ENCODE measurements at regions of chr1 and their contacts with region 1.

Region 1: DNA sequence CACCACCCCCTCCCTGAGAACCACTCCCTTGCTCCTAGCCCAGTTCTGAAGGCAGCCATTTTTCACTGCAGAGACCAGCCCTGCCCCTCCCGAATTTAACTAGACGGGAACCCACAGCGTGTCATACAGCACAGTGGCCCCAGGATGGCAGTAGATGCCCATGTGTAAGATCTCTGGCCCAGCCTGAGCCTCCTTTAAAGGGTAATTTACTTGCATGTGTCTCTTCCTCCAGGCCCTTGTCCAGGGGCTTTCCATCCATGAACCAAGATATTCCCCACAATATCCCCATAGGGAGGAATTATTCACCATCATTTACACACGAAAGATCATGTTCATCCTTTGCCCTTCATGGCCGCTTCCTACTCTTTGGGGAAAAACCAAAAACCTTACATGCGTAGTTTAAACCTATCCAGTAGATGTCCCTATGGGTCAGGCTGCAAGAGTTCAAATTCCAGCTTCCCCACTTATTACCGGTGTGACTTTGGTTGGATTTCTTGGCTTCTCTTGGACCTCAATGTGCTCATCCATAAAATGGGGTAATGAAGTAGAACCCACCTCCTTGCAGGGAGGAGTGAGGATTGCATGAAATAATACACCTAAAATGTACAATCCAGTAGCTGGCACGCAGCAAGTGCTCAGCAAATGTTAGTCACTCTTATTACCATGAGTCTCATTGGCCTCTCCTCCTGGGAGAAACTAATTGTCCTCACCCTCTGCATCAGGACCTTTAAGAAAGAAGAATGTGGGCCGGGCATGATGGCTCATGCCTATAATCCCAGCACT is 4.0 kb upstream of the LACTBL1 start:
- DNase-seq: peak; percentile 89
- ATAC-seq: peak; percentile 90
- H3K4me3 ChIP-seq: peak overlapping the region; percentile 43
- H3K27ac ChIP-seq: peak overlapping the region; percentile 3; the same call in 1 of the 2 replicates
- H3K4me1 ChIP-seq: peaks cover 21% of the 10 kb centered on the region
- H3K27me3 ChIP-seq: no peaks in the 10 kb centered on the region
- CTCF ChIP-seq: peak; percentile 95

Region 2: GRCh38 chr1:23013657-23014056 is 37.0 kb after region 1 on chr1:
- CTCF ChIA-PET with region 1: no interaction called
- POLR2A ChIA-PET with region 1: no interaction called
- intact Hi-C with region 1: loop called (anchors 2 kb)
- DNase-seq: peak; percentile 26
- ATAC-seq: no peak
- H3K4me3 ChIP-seq: no peak overlapping the region
- H3K27ac ChIP-seq: no peak overlapping the region
- H3K4me1 ChIP-seq: peaks cover 28% of the 10 kb centered on the region
- H3K27me3 ChIP-seq: no peaks in the 10 kb centered on the region
- CTCF ChIP-seq: no peak

Region 3: DNA sequence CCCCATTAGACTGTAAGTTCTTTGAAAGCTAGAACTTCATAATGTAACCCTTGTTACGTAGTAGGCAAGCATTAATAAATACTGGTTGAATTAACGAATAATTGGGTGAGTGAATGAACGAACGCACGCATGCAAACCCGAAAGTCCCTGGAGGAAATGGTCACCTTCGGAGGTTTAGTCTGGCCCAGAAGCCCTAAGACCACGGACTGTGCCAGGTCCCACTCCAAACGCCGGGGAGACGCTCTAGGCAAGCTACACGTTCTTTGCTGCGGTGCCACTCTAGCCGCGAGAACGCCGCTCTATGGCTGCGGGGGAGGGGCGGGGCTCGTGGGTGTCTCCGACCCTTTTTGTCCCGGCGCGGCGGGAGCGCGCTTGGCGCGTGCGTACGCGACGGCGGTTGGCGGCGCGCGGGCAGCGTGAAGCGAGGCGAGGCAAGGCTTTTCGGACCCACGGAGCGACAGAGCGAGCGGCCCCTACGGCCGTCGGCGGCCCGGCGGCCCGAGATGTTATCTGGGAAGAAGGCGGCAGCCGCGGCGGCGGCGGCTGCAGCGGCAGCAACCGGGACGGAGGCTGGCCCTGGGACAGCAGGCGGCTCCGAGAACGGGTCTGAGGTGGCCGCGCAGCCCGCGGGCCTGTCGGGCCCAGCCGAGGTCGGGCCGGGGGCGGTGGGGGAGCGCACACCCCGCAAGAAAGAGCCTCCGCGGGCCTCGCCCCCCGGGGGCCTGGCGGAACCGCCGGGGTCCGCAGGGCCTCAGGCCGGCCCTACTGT is 42.6 kb after region 1 on chr1 and contains the start of gene KDM1A:
- CTCF ChIA-PET with region 1: no interaction called
- POLR2A ChIA-PET with region 1: no interaction called
- intact Hi-C with region 1: loop called (anchors 1 kb)
- DNase-seq: peak; percentile 98
- ATAC-seq: peak; percentile 95
- H3K4me3 ChIP-seq: peak within 1 kb of the TSS; percentile 94
- H3K27ac ChIP-seq: peak within 1 kb of the TSS; percentile 79
- H3K4me1 ChIP-seq: peaks cover 24% of the 10 kb centered on the region; the same call in 1 of the 2 replicates
- H3K27me3 ChIP-seq: no peaks in the 10 kb centered on the region
- CTCF ChIP-seq: no peak
- total RNA-seq, gene KDM1A: 186 and 229 TPM in 2 replicates

Region 4: GRCh38 chr1:23074012-23074411 is 97.4 kb after region 1 on chr1:
- CTCF ChIA-PET with region 1: no interaction called
- POLR2A ChIA-PET with region 1: no interaction called
- intact Hi-C with region 1: loop called (anchors 1 kb)
- DNase-seq: peak; percentile 76
- ATAC-seq: peak; percentile 86
- H3K4me3 ChIP-seq: 0 out of 2 replicates have a peak overlapping the region, but pooled peaks have one; percentile 15
- H3K27ac ChIP-seq: peak overlapping the region; percentile 92
- H3K4me1 ChIP-seq: peaks cover 40% of the 10 kb centered on the region
- H3K27me3 ChIP-seq: no peaks in the 10 kb centered on the region
- CTCF ChIP-seq: no peak

Region 5: GRCh38 chr1:23403735-23404486 is 427.3 kb after region 1 on chr1:
- CTCF ChIA-PET with region 1: no interaction called
- POLR2A ChIA-PET with region 1: no interaction called
- intact Hi-C with region 1: loop called (anchors 5 kb)
- DNase-seq: peak; percentile 98
- ATAC-seq: peak; percentile 93
- H3K4me3 ChIP-seq: peak overlapping the region; percentile 49
- H3K27ac ChIP-seq: peak overlapping the region; percentile 91
- H3K4me1 ChIP-seq: peaks cover 22% of the 10 kb centered on the region
- H3K27me3 ChIP-seq: no peaks in the 10 kb centered on the region
- CTCF ChIP-seq: peak; percentile 96

Region 6: DNA sequence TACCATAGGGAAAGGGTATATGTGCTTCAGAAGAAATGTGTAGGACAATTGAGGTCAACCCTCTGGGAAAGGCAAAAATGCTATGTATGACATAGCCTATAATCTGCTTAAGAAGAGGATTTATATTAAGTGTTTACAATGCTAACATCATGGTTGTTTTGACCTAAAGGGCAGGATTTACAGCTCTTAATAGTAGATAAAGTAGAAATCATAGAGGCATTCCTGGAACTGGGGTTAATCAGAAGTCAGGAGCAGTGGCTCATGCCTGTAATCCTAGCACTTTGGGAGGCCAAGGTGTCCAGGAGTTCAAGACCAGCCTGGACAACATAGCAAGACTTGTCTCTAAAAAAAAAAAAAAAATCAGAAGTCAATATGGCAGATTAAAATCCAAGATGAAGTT is 706.3 kb after region 1 on chr1:
- CTCF ChIA-PET with region 1: no interaction called
- POLR2A ChIA-PET with region 1: no interaction called
- intact Hi-C with region 1: no loop called
- DNase-seq: no peak
- ATAC-seq: no peak
- H3K4me3 ChIP-seq: no peak overlapping the region
- H3K27ac ChIP-seq: no peak overlapping the region
- H3K4me1 ChIP-seq: no peaks in the 10 kb centered on the region
- H3K27me3 ChIP-seq: no peaks in the 10 kb centered on the region
- CTCF ChIP-seq: no peak